Right ventricle myocardium inferior (tissue), 1 donor: ENCODE measurements at regions of chr11 and their contacts with region 1.

Region 1: GRCh38 chr11:44950625-44951476 is at the start of gene TP53I11:
- DNase-seq: peak; percentile 93
- ATAC-seq: peak; percentile 83
- total RNA-seq, gene TP53I11: 59.1 TPM

Region 2: GRCh38 chr11:44936525-44936924 is 14.3 kb before region 1 on chr11:
- intact Hi-C with region 1: no loop called
- DNase-seq: peak; percentile 90
- ATAC-seq: peak; percentile 49

Region 3: DNA sequence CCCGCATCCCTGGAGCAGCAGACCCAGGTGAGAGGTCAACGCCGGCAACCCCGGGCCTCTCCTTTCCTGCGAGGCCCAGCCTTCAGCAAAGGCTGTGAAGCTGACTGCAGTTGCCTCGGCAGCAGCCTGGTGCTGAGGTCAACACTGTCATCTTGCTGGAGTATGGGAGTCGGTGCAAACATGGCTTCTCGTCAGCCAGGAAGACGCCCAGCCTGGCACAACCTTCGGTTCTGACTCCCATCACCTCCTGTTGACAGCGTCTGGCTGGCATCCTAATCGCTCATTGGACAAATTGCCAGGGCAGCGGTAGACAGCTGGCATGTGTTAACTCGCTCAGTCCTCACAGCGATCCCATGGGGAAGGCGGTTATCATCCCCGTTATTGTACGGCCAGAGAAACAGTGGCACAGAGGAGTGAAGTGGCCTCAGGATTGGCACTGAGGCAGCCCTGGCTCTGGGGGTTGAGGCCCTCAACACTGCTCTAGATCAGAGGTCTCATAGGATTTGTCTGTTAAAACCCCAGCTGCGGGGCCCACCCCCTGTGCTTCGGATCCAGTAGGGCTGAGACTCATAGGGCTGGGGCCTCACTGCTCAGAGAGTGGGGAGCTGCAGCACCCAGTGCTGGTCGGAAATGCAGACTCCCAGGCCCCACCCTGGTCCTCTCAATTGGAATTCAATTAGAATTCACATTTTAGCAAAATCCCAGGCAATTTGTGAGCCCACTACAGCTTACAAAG is 39.1 kb after region 1 on chr11:
- intact Hi-C with region 1: loop called (anchors 5 kb)
- DNase-seq: peak; percentile 91
- ATAC-seq: peak; percentile 94

Region 4: GRCh38 chr11:45025716-45026492 is 75.1 kb after region 1 on chr11:
- intact Hi-C with region 1: loop called (anchors 5 kb)
- DNase-seq: peak; percentile 72
- ATAC-seq: peak; percentile 33

Region 5: DNA sequence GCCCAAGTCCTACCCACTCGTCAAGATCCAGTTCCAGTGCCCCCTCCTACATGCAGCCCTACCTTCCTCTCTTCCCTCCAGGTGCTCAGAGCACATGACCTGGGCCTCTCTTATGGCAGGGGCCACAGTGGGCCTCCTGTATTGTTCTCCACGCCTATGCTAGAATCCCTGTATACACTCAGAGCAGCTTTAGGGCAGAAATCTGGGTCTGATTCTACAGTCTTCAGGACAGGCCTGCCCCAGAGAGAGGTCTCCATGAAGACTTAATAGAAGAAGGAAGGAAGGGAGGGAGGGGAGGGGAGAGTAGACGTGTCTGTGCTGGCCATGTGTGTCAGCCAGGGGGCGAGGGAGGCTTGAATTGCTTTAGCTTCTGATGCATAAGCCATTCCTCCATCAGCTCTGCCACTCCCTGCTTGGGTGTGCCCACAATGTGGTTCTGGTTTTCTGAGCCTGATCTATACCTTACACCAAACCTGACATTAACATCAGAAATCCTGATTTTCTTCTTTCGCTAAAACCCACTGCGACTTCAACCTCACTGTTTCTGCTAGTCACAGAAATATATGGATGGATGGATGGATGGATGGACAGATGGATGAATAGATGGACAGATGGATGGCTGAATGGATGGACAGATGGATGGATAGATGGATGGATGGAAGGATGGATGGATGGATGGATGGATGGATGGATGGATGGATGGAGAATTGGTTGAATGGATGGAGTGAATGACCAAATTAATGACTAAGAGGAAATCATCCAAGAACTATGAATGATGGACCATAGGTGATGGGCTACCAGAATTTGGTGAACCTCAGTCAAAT is 139.0 kb after region 1 on chr11:
- intact Hi-C with region 1: loop called (anchors 5 kb)
- DNase-seq: no peak
- ATAC-seq: peak; percentile 7